ENCODE measurements at regions of chr11 and their contacts with region 1.

Region 1: GRCh38 chr11:3854977-3855807 is at the start of gene STIM1:
- DNase-seq: peak; percentile 95
- ATAC-seq: peak; percentile 94 to 95
- total RNA-seq, gene STIM1: 21.4 to 25.8 TPM

Region 2: GRCh38 chr11:3723014-3723708 is 132.0 kb before region 1 on chr11:
- intact Hi-C with region 1: no loop called
- DNase-seq: no peak
- ATAC-seq: no peak

Region 3: GRCh38 chr11:3735827-3736226 is 119.4 kb before region 1 on chr11:
- intact Hi-C with region 1: no loop called
- DNase-seq: no peak
- ATAC-seq: no peak

Region 4: DNA sequence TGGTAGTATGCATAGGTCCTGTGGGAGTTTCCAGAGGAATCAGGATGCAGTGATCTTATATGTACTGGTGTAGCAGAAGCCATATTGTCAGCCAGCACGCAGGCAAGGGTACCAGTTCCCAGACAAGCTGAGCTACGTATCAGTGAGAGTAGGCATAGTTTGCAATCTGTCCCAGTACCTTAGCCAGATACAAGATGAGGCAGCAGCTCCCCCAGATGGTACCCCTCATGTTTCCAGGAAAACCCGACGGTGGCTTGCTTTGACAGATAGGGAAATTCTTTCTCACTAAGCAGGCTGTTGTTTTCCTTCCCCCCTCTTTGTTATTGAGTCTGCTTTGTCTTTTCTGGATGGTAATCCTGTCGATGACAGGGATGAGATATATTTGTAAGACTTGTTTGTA is 129.7 kb after region 1 on chr11:
- intact Hi-C with region 1: loop called in 1 of 2 experiments (anchors 10 kb)
- DNase-seq: no peak
- ATAC-seq: no peak

Region 5: GRCh38 chr11:4072668-4073285 is 217.6 kb after region 1 on chr11:
- intact Hi-C with region 1: loop called in 1 of 2 experiments (anchors 2 kb)
- DNase-seq: no peak
- ATAC-seq: peak; percentile 90 to 91

Measured in left cardiac atrium (tissue), 4 donors.